ENCODE measurements at regions of chr10 and their contacts with region 1.

Region 1: DNA sequence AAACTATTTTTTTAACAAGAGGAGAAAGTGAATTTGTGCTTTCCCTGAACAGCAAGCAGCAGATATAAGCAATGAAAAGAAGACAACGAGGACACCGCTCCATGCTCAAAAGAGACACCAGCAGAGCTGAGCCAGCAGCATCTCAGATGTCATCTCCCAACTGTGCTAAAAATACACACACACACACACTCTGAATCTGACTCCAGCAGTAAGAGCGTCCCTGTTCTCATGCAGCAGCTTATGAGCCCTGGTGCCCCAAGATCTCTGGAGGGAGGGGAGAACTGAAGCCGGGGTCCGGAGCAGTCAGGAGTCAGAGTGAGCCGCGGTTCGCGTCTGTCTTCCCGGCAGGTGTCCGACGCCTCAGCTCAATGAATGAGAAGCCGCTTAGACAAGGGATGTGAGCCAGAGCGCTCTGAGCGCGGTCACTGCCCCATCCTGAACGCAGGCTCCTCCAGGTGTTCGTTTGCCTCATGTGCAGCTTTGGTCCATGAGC is 49.2 kb downstream of the SVIL start:
- DNase-seq: no peak
- H3K4me3 ChIP-seq: no peak overlapping the region
- H3K27ac ChIP-seq: no peak overlapping the region
- H3K27me3 ChIP-seq: no peaks in the 10 kb centered on the region
- CTCF ChIP-seq: no peak

Region 2: GRCh38 chr10:29642990-29643389 is 57.5 kb after region 1 on chr10:
- CTCF ChIA-PET with region 1: interaction called, 17 read pairs
- POLR2A ChIA-PET with region 1: no interaction called
- DNase-seq: no peak
- H3K4me3 ChIP-seq: no peak overlapping the region
- H3K27ac ChIP-seq: no peak overlapping the region
- H3K27me3 ChIP-seq: no peaks in the 10 kb centered on the region
- CTCF ChIP-seq: no peak

Region 3: DNA sequence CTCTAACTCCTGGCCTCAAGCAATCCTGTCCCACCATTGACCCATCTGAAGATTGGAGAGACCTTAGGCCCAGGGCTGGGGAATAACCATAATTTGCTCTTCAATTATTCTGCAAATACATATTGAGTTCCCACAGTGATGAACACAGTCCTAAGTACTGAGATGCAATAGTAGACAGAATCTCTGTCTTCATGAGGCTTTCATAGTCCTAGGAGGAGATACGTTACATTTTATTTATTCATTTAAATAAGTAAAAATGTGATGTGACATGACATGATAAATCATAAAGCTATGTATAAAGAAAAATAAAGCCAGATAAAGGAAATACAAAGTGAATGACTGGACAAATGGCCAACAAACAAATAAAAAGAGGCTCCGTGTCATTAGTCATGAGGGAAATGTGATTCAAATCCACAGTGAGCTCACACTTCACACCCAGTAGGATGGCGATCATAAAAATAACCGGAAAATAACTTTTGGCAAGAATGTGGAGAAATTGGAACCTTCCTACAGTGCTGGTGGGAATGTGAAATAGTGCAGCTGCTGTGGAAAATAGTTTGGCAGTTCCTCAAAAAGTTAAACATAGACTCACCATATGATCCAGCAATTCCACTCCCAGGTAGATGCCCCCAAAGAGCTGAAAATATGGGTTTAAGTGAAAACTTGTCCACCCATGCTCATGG is 525.9 kb after region 1 on chr10:
- CTCF ChIA-PET with region 1: no interaction called
- POLR2A ChIA-PET with region 1: interaction called, 14 read pairs
- DNase-seq: peak; percentile 58
- H3K4me3 ChIP-seq: no peak overlapping the region
- H3K27ac ChIP-seq: no peak overlapping the region
- H3K27me3 ChIP-seq: no peaks in the 10 kb centered on the region
- CTCF ChIP-seq: no peak

Measured in AG04450 (cell line).